ENCODE measurements at regions of chr3 and their contacts with region 1.

Region 1: DNA sequence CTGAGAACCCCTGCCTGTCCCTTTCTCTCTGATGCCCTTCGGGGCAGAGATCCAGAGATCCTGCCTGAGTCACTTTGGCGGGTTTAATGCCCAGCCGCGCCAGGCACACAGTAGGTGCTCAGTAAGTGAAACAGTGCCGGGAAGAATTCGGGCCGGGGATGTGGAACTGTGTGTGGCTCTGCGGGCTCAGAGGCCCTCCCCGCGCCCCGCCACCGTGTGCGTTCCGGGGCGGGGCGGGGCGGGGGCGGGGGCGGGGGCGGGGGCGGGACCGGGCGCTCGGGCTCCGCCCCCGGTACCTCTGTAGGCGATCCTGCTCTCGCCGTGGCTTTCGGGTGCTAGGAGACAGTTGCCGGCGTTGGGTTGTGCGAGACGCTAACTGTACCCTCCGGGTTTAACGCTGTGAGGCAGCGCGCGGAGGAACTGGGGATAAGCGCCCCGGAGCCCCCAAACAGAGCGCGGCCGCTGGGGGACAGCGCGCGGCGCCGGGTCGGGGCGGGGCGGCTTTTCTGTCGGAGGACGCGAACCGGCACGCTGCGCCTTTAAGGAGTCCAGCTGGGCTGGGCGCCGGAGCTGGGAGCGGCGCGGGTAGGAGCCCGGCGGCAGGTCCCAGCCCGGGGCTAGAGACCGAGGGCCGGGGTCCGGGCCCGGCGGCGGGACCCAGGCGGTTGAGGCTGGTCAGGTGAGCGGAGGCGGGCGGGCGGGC is at the start of gene ABHD6:
- DNase-seq: peak; percentile 77 to 90 (median 81)
- ATAC-seq: peak; percentile 76 to 95 (median 94)
- H3K4me3 ChIP-seq: peak within 1 kb of the TSS; percentile 70 to 96 (median 90)
- H3K27ac ChIP-seq: peak within 1 kb of the TSS in 11 of 12 donors; percentile 62 to 90 (median 85)
- H3K4me1 ChIP-seq: peaks cover 0 to 31% (median 10%) of the 10 kb centered on the region in 12 donors
- H3K27me3 ChIP-seq: no peaks in the 10 kb centered on the region
- CTCF ChIP-seq: peak in 8 of 12 donors; percentile 18 to 70 (median 34)
- POLR2A ChIP-seq: peak in 1 of 2 donors; percentile 57
- total RNA-seq, gene ABHD6: 6.0 to 14.6 (median 6.9) TPM

Region 2: DNA sequence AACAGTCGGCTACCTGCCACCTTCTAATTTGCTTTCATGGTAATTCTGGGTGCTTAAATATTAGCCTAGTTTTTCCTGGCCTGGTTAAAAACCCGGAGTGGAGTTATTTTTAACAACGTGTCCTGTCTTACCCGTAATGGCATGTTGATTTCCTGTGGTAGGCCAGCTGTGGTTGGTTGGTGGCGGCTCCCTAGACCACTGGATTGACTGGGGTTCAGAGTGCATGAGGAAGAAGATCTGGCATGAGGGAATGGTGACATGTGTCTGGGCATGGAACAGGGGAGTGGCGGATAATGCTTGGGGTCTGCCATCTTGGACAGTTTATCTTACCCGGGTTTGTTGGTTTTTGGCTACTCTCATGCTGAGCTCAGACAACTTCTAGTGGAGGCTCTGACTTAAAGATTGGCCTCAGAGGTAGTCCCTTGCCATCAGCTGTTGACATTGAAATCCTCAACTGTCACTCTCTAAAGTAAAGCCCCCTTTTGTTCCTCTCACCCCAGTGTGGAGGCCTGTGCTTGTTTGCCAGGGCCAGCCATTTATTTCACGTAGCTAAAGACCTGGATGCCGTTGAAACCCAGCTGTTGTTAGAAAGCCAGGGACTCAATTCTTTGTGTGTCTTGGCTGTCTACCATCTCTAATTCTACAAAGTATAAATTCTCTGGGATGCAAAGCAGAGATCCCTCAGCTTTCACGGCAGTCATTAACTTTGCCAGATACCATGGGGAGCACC is 108.2 kb before region 1 on chr3:
- intact Hi-C with region 1: no loop called
- DNase-seq: no peak
- ATAC-seq: no peak
- H3K4me3 ChIP-seq: no peak overlapping the region
- H3K27ac ChIP-seq: peak overlapping the region in 1 of 12 donors; percentile 27
- H3K4me1 ChIP-seq: peaks cover 0 to 3% (median 0%) of the 10 kb centered on the region in 12 donors
- H3K27me3 ChIP-seq: no peaks in the 10 kb centered on the region
- CTCF ChIP-seq: no peak
- POLR2A ChIP-seq: no peak

Region 3: GRCh38 chr3:58305882-58306711 is 68.7 kb after region 1 on chr3 and contains the starts of genes HTD2 and RPP14:
- intact Hi-C with region 1: loop called in 4 of 10 experiments (anchors 2 to 5 kb)
- DNase-seq: peak; percentile 98 to 100 (median 99)
- ATAC-seq: peak; percentile 94 to 97 (median 96)
- H3K4me3 ChIP-seq: peak within 1 kb of the TSS; percentile 80 to 97 (median 86)
- H3K27ac ChIP-seq: peak within 1 kb of the TSS; percentile 90 to 99 (median 96)
- H3K4me1 ChIP-seq: peaks cover 5 to 36% (median 26%) of the 10 kb centered on the region in 12 donors
- H3K27me3 ChIP-seq: peaks cover 0 to 5% (median 0%) of the 10 kb centered on the region in 9 donors
- CTCF ChIP-seq: peak; percentile 95 to 99 (median 96)
- POLR2A ChIP-seq: peak in 1 of 2 donors; percentile 76
- total RNA-seq, gene HTD2: 5.7 to 21.6 (median 12.4) TPM
- total RNA-seq, gene RPP14: 9.6 to 32.4 (median 24.0) TPM